ENCODE measurements at regions of chr7 and their contacts with region 1.

Region 1: DNA sequence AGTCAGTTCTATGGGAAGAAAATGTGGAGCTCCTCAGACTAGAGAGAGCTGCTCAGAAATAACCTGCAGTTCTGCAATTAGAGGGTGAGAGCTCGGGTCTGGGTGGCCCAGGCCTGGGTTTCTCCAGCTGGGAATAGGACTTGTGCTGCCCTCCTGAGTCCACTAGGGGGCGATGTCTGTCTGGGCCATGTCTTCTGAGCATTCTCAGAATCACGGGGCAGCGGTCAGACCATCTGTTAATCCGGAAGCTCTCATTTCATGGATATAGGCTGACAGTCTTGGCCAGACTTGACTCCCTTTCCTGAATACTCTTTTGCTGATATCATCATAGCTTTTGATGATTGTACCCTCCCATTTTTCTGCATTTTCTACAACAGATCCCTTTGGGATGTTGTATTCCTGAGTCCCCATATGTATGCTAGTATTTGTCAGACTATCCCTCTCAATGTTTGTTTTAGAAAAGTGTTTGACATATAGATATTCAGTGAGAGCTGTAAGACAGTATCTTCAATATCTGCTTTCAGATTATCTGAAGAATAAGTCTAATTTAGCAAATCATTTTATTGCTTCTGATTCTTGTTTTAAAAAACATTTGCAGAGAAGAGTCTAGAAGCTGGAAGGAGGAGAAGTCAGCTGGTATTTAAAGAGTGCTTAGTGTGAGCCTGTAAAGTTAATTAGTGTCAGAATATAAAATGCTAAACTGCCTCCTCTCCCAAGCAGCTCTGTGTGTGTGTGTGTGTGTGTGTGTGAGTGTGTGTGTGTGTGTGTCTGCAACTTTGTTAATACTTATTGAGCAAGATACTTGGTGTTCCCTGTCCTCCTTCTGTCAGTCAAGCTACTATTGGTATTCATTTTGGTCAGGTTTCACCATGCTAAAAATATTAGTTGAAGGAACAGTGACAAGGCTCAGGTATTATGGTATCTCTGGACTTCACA is 38.0 kb downstream of the STARD3NL start:
- H3K4me3 Mint-ChIP-seq: no peak overlapping the region
- H3K27ac Mint-ChIP-seq: no peak overlapping the region
- H3K4me1 Mint-ChIP-seq: peaks cover 17% of the 10 kb centered on the region
- H3K27me3 Mint-ChIP-seq: no peaks in the 10 kb centered on the region

Region 2: DNA sequence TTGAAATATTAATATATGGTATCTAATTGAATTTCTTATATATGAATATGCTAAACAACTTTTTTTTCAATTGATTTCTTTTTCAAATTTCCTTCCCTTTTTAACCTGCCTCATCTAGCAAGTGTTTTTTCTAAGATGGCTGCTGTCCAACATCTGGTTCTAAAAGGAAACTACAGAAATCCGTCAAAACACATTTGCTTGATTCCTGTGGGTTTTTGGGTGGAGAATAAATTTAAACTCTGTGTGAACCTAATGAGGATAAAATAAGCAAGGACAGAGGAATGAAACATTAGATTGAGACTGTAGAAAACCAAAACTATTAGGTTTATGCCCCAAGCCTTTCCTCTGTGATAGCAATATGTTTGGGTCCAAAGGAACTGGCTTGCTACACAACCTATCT is 113.5 kb before region 1 on chr7:
- intact Hi-C with region 1: no loop called
- H3K4me3 Mint-ChIP-seq: no peak overlapping the region
- H3K27ac Mint-ChIP-seq: no peak overlapping the region
- H3K4me1 Mint-ChIP-seq: peaks cover 5% of the 10 kb centered on the region
- H3K27me3 Mint-ChIP-seq: no peaks in the 10 kb centered on the region

Region 3: DNA sequence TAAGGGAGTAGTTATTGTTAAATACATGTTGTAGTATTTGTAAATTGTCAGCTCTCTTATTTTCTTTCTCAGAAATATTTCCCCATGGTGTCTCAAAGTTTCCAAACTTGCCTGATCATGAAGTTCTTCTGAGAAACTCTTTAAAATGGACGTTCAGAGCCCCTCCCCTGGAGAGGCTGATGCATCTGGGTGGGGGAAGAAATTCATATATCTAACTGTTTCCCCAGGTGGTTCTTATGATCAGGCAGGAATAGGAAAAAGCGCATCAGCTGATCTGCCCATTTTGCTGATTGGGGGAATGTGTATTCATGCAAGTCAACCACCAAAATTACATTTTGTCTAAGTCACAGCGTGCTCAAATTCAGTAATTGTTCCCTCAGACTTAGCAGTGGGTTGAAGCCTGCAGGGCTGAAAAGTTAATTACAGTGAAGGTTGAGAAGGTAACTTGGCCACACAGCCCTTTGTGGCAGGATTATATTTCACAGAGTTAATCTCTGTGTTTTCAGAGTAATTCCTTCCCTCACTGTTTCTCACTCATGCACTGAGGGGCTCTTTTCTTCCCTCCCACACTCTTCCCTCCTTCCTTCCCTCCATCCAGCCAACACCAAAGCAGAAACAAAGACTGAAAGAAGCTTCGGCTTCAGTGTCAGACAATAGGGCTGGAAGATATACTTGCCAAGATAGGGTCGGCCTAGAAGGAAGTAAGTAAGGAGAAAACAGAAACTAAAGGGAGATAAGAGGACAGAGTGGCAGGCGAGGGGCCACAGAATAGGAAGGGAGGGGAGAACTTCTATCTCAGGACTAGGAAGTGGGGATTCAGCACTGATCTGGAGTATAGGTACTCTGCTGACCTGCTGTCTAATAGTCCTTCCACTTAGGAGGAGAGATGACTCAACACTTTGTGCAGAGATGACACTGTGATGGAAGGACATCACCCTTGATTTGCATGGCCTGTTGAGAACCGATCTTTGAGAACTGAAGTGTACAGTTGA is 88.5 kb before region 1 on chr7:
- intact Hi-C with region 1: no loop called
- H3K4me3 Mint-ChIP-seq: no peak overlapping the region
- H3K27ac Mint-ChIP-seq: peak overlapping the region; percentile 21
- H3K4me1 Mint-ChIP-seq: peaks cover 10% of the 10 kb centered on the region
- H3K27me3 Mint-ChIP-seq: no peaks in the 10 kb centered on the region

Region 4: GRCh38 chr7:38318803-38319416 is 102.9 kb after region 1 on chr7:
- intact Hi-C with region 1: loop called (anchors 5 kb)
- H3K4me3 Mint-ChIP-seq: no peak overlapping the region
- H3K27ac Mint-ChIP-seq: no peak overlapping the region
- H3K4me1 Mint-ChIP-seq: peaks cover 38% of the 10 kb centered on the region
- H3K27me3 Mint-ChIP-seq: peaks cover 5% of the 10 kb centered on the region

Region 5: DNA sequence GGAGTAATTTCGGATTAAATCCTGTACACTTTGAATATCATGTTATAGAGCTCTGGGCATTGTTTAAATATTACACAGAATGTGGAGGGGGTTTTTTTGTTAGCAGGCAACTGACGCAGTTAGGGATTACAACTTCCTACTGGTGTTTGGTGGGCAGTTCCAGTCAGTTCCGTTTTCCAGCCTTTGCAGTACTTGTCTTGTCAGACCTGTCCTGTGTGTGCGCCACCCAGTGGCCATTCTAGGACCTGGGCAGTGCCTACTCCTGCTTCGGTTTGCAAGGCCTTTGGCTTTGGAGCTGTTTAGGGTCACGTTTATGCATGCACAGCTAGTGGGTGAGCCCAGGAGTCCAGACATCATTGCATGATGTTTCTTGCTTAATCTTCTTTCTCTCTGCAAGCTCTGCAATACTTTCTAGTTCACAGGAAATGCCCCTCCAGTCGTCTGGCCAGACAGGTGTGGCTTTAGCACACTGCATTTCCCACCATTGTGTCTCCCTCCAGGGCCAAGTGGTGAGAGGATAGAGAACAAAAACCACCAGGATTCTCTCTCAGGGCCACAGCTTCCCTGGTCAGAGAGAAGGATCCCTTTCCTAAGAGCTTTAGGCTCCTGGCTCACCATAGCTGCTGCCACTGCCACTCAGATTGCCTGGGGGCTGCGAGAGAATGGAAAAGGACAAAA is 154.0 kb after region 1 on chr7:
- intact Hi-C with region 1: loop called (anchors 2 kb)
- H3K4me3 Mint-ChIP-seq: peak overlapping the region; percentile 19
- H3K27ac Mint-ChIP-seq: peak overlapping the region; percentile 86
- H3K4me1 Mint-ChIP-seq: peaks cover 44% of the 10 kb centered on the region
- H3K27me3 Mint-ChIP-seq: no peaks in the 10 kb centered on the region

Measured in dendritic cell treated with granulocyte-macrophage colony-stimulating factor and Interleukin-4, amounts not matched to agents 40 ng/mL and 50 ng/mL, for 4 days (primary cell).